ENCODE measurements at regions of chr5 and their contacts with region 1.

Region 1: DNA sequence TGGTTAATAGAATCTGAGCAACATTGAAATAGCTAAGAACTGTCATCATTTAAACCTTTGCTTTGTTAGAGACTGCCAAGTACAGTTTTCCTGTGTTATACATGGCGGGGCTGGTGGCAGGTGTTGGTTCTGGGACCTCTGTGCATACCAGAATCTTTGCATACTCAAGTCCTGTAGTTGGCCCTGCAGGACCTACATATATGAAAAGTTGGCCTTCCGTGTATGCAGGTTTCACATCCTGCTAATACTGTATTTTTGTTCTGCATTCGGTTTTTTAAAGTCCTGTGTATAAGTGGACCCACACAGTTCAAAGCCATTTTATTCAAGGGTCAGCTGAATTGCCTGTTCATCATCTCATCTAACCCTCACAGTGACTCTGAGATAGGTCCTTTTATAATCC is 36.4 kb downstream of the LARP1 start:
- DNase-seq: no peak

Region 2: DNA sequence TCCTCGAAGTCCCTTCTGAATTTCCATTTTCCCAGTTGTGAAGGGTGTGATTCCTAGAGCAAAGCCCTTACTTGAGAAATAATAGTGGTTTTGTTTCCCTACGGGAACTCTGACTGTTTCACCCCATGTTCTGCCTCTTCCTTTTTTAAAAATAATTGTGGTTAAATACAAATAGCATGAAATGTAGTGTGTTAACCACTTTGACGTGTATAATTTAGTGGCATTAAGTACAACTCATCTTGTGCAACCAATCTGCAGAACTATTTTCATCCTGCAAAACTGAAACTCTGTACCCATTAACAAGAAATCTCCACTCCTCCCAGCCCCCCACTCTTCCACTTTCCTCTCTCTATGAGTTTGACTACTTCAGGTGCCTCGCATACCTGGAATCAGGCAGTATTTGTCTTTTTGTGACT is 277.9 kb before region 1 on chr5:
- intact Hi-C with region 1: no loop called
- DNase-seq: no peak

Region 3: DNA sequence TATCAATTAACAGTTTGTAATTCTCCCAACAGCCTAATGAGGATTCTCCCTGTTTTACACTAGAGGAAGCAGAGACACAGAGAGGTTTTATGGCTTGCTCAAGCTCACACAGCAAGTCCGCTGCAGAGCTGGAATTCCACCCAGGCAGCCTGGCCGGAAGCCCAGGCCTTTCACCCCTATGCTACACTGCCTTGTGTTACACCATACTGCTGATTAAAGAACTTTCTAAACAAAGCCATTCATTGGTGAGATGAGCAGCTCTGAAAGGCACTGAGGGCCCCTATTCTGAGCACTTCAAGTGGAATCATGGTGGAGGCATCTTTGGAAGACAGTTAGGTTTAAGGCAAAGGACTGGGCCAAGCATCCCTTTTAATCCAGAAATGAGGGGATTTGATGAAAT is 51.1 kb before region 1 on chr5:
- intact Hi-C with region 1: loop called in 1 of 2 experiments (anchors 10 kb)
- DNase-seq: peak; percentile 87

Measured in posterior vena cava (tissue), 2 donors.